ENCODE measurements at regions of chr18 and their contacts with region 1.

Region 1: GRCh38 chr18:74334242-74334893 is 18.7 kb downstream of the C18orf63 start:
- DNase-seq: no peak
- H3K4me3 Mint-ChIP-seq: no peak overlapping the region
- H3K27ac Mint-ChIP-seq: no peak overlapping the region
- H3K4me1 Mint-ChIP-seq: no peaks in the 10 kb centered on the region
- H3K27me3 Mint-ChIP-seq: peaks cover 31% of the 10 kb centered on the region

Region 2: GRCh38 chr18:74239567-74239966 is 94.8 kb before region 1 on chr18:
- intact Hi-C with region 1: loop called (anchors 2 kb)
- DNase-seq: no peak
- H3K4me3 Mint-ChIP-seq: no peak overlapping the region
- H3K27ac Mint-ChIP-seq: no peak overlapping the region
- H3K4me1 Mint-ChIP-seq: no peaks in the 10 kb centered on the region
- H3K27me3 Mint-ChIP-seq: peaks cover 13% of the 10 kb centered on the region

Measured in activated T-helper 2 cell treated with anti-CD3 and anti-CD28 coated beads, Interferon-gamma antibody, Interleukin-2, Interleukin-4, amounts not matched to agents 10 μg/mL and 5 μg/mL and 100 μg/mL, durations not matched to agents 14 hours and 24 hours and 36 hours (primary cell).